ENCODE measurements at regions of chr11 and their contacts with region 1.

Region 1: GRCh38 chr11:85595285-85595884 is 31.8 kb downstream of the DLG2 start:
- DNase-seq: no peak
- H3K4me3 Mint-ChIP-seq: no peak overlapping the region
- H3K27ac Mint-ChIP-seq: no peak overlapping the region
- H3K4me1 Mint-ChIP-seq: no peaks in the 10 kb centered on the region
- H3K27me3 Mint-ChIP-seq: no peaks in the 10 kb centered on the region

Region 2: DNA sequence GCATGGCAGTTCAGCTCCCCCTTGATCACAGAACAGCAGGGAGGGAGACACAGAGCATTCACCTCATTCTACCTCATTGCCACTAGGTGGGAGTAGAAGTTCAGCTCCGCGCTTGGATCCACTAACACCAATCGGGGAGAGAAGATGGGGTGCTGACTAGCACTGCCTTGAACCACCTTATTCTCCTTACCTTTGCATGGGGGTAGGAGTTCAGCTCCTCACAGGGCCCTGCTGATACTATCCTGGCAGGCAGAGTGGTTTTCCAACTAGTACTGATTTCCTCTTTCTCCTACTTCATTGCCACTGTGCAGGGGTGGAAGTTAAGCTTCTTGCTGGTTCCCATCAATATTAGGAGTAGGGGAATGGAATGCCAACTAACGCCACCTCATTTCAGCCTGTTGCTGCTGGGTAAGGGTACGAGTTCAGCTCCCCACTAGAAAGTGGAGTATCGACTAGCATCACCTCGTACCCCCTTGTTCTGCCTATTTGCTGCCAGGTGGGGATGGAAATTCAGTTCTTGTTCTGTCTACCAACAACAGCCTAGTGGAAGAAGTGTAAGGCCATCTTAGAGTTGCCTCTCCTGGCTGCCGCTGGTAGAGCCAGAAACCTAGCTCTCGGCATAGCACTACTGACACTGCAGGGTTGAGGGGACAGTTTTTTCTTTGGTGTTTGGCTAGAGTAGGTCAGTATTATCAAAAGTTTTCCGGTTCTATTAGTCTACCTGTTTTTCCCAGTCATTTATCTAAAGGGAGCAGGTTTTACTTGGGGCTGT is 1758.3 kb before region 1 on chr11:
- CTCF ChIA-PET with region 1: no interaction called
- intact Hi-C with region 1: loop called (anchors 2 kb)
- DNase-seq: peak; percentile 40
- H3K4me3 Mint-ChIP-seq: no peak overlapping the region
- H3K27ac Mint-ChIP-seq: no peak overlapping the region
- H3K4me1 Mint-ChIP-seq: no peaks in the 10 kb centered on the region
- H3K27me3 Mint-ChIP-seq: no peaks in the 10 kb centered on the region

Region 3: GRCh38 chr11:84526254-84526653 is 1069.1 kb before region 1 on chr11:
- CTCF ChIA-PET with region 1: no interaction called
- intact Hi-C with region 1: no loop called
- DNase-seq: no peak
- H3K4me3 Mint-ChIP-seq: no peak overlapping the region
- H3K27ac Mint-ChIP-seq: no peak overlapping the region
- H3K4me1 Mint-ChIP-seq: no peaks in the 10 kb centered on the region
- H3K27me3 Mint-ChIP-seq: no peaks in the 10 kb centered on the region

Region 4: GRCh38 chr11:84720706-84721402 is 874.5 kb before region 1 on chr11:
- CTCF ChIA-PET with region 1: no interaction called
- intact Hi-C with region 1: loop called (anchors 5 kb)
- DNase-seq: peak; percentile 4
- H3K4me3 Mint-ChIP-seq: peak overlapping the region; percentile 67
- H3K27ac Mint-ChIP-seq: no peak overlapping the region
- H3K4me1 Mint-ChIP-seq: peaks cover 4% of the 10 kb centered on the region
- H3K27me3 Mint-ChIP-seq: peaks cover 16% of the 10 kb centered on the region

Region 5: GRCh38 chr11:84780689-84781293 is 814.6 kb before region 1 on chr11:
- CTCF ChIA-PET with region 1: no interaction called
- intact Hi-C with region 1: no loop called
- DNase-seq: no peak
- H3K4me3 Mint-ChIP-seq: no peak overlapping the region
- H3K27ac Mint-ChIP-seq: no peak overlapping the region
- H3K4me1 Mint-ChIP-seq: no peaks in the 10 kb centered on the region
- H3K27me3 Mint-ChIP-seq: no peaks in the 10 kb centered on the region

Region 6: DNA sequence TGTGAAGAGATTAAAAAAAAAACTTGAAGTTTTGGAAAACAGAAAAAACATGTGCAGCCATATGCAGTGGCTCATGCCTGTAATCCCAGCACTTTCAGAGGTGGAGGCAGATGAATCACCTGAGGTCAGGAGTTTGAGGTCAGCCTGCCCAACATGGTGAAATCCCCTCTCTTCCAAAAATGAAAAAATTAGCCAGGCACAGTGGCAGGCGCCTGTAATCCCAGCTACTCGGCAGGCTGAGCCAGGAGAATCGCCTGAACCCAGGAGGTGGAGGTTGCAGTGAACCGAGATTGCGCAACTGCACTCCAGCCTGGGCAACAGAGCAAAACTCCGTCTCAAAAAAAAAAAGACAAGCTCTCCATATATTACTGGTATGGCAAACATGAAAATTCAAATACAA is 24.1 kb after region 1 on chr11:
- CTCF ChIA-PET with region 1: no interaction called
- intact Hi-C with region 1: no loop called
- DNase-seq: no peak
- H3K4me3 Mint-ChIP-seq: no peak overlapping the region
- H3K27ac Mint-ChIP-seq: no peak overlapping the region
- H3K4me1 Mint-ChIP-seq: peaks cover 8% of the 10 kb centered on the region
- H3K27me3 Mint-ChIP-seq: no peaks in the 10 kb centered on the region

Region 7: GRCh38 chr11:85664615-85665481 is 69.5 kb after region 1 on chr11 and contains the start of gene CREBZF:
- CTCF ChIA-PET with region 1: no interaction called
- intact Hi-C with region 1: loop called (anchors 1 kb)
- DNase-seq: peak; percentile 98
- H3K4me3 Mint-ChIP-seq: peak within 1 kb of the TSS; percentile 98
- H3K27ac Mint-ChIP-seq: peak within 1 kb of the TSS; percentile 96
- H3K4me1 Mint-ChIP-seq: peaks cover 23% of the 10 kb centered on the region
- H3K27me3 Mint-ChIP-seq: no peaks in the 10 kb centered on the region
- total RNA-seq, gene CREBZF: 53.3 to 53.9 TPM

Region 8: GRCh38 chr11:86041975-86042378 is 446.6 kb after region 1 on chr11:
- CTCF ChIA-PET with region 1: no interaction called
- intact Hi-C with region 1: loop called (anchors 5 kb)
- DNase-seq: peak; percentile 77
- H3K4me3 Mint-ChIP-seq: no peak overlapping the region
- H3K27ac Mint-ChIP-seq: peak overlapping the region; percentile 73
- H3K4me1 Mint-ChIP-seq: peaks cover 69% of the 10 kb centered on the region
- H3K27me3 Mint-ChIP-seq: no peaks in the 10 kb centered on the region

Region 9: GRCh38 chr11:86608251-86608799 is 1012.9 kb after region 1 on chr11:
- CTCF ChIA-PET with region 1: no interaction called
- intact Hi-C with region 1: loop called (anchors 1 kb)
- DNase-seq: peak; percentile 70
- H3K4me3 Mint-ChIP-seq: no peak overlapping the region
- H3K27ac Mint-ChIP-seq: no peak overlapping the region
- H3K4me1 Mint-ChIP-seq: peaks cover 29% of the 10 kb centered on the region
- H3K27me3 Mint-ChIP-seq: no peaks in the 10 kb centered on the region